ENCODE measurements at regions of chr15 and their contacts with region 1.

Region 1: GRCh38 chr15:99928429-99928981 is 195.3 kb upstream of the LYSMD4 start:
- DNase-seq: peak; percentile 56 to 90 (median 86)
- H3K4me3 ChIP-seq: peak overlapping the region; percentile 39
- H3K27ac ChIP-seq: peak overlapping the region; percentile 79 to 88
- H3K4me1 ChIP-seq: peaks cover 1% of the 10 kb centered on the region
- H3K27me3 ChIP-seq: no peaks in the 10 kb centered on the region
- CTCF ChIP-seq: peak; percentile 50 to 64 (median 59)
- EP300 ChIP-seq: no peak
- POLR2A ChIP-seq: no peak

Region 2: DNA sequence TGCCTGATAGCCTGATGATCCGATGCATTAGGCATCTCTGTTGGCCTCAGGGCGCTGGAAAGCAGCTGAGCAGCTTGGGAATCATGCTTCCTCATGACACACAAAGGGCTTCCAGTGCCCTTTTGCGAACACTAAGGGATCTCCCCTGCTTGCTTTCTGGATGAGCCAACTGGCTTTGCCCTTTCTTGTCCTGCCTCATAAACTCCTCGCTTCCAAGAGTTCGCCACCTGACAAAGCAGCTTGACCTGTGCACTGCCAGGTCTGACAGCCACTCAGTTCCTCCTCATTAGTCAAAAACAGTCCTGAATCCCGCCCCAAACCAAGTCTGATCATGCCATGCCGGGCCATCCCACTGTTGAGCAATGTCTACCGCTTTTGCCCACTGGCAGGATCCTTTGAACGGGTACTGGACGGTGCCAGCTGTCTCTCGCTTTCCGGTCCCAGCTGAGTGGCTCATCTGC is 70.2 kb after region 1 on chr15:
- intact Hi-C with region 1: no loop called
- DNase-seq: no peak
- H3K4me3 ChIP-seq: no peak overlapping the region
- H3K27ac ChIP-seq: no peak overlapping the region
- H3K4me1 ChIP-seq: no peaks in the 10 kb centered on the region
- H3K27me3 ChIP-seq: no peaks in the 10 kb centered on the region
- CTCF ChIP-seq: no peak
- EP300 ChIP-seq: no peak
- POLR2A ChIP-seq: no peak

Region 3: DNA sequence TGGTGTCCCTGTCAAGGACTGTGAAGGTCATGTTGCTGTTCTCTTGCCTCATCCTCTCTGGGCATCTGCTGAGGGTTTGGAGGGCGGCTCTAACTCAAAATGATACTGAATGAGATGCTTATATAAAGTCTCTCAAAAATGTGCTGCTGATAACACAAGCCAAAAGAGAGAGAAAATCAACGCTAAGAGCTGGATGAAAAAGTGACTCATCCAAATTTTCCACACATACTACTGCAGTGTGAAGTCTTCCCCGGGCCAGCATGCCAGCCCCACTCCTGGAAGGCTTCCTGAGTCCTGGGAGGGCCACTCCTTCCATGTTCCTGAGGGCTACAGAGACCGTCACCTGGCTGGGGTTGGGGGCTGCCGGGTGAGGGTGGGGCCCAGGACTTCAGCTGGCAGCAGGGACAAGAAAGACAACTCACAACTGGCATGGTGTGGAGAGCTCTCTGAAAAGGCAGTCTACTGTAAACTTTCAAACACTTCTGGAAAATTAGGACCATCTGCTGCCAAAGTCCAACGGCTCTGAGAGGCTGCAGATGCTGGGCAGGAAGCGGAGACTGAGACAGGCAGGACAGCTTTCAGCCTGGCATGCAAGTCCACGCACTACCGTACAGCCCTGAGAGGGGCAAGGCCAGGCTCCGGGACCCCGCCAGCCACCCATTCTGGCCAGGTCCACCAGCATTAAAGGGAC is 213.0 kb after region 1 on chr15:
- intact Hi-C with region 1: loop called in 1 of 4 experiments (anchors 10 kb)
- DNase-seq: no peak
- H3K4me3 ChIP-seq: no peak overlapping the region
- H3K27ac ChIP-seq: no peak overlapping the region
- H3K4me1 ChIP-seq: no peaks in the 10 kb centered on the region
- H3K27me3 ChIP-seq: no peaks in the 10 kb centered on the region
- CTCF ChIP-seq: no peak
- EP300 ChIP-seq: no peak
- POLR2A ChIP-seq: no peak

Measured in ovary (tissue), 10 donors.